ENCODE measurements at regions of chr2 and their contacts with region 1.

Region 1: DNA sequence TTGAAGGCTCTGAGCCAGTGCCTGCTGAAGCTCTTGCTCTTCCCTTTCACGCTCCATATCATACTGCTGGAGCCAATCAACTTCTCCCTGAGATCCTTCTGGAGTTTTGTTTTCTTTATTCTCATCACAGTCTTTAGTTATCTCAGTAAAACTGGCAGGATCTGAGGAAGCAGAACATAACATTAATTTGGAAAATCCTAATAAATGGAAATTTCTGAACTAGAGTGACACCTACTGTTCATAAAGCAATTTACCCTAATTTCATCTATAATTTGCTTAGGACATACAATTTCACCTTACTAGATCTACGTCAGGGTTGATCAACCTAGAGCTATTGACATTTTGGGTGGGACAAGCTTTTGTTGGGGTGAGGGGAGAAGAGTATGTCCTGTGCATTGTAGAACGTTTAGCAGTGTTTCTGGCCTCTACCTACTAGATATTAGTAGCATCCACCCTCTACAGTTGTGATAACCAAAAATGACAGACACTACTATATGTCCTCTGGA is 47.1 kb downstream of the VIL1 start:
- DNase-seq: no peak
- ATAC-seq: peak in 1 of 4 donors; percentile 45
- H3K4me3 ChIP-seq: no peak overlapping the region
- H3K27ac ChIP-seq: no peak overlapping the region
- H3K4me1 ChIP-seq: no peaks in the 10 kb centered on the region
- H3K27me3 ChIP-seq: no peaks in the 10 kb centered on the region
- CTCF ChIP-seq: peak; percentile 47

Region 2: GRCh38 chr2:218292048-218293014 is 173.7 kb before region 1 on chr2 and contains the start of gene TMBIM1:
- intact Hi-C with region 1: loop called (anchors 5 to 10 kb)
- DNase-seq: peak; percentile 88 to 92
- ATAC-seq: peak; percentile 88 to 95 (median 93)
- H3K4me3 ChIP-seq: peak within 1 kb of the TSS; percentile 93
- H3K27ac ChIP-seq: peak within 1 kb of the TSS; percentile 96
- H3K4me1 ChIP-seq: peaks cover 39% of the 10 kb centered on the region
- H3K27me3 ChIP-seq: no peaks in the 10 kb centered on the region
- CTCF ChIP-seq: peak; percentile 96
- total RNA-seq, gene TMBIM1: 152 to 197 (median 157) TPM

Region 3: GRCh38 chr2:218406209-218406948 is 59.7 kb before region 1 on chr2:
- intact Hi-C with region 1: loop called (anchors 2 kb)
- DNase-seq: peak; percentile 98 to 99
- ATAC-seq: peak; percentile 86 to 89 (median 88)
- H3K4me3 ChIP-seq: peak overlapping the region; percentile 60
- H3K27ac ChIP-seq: peak overlapping the region; percentile 74
- H3K4me1 ChIP-seq: peaks cover 26% of the 10 kb centered on the region
- H3K27me3 ChIP-seq: no peaks in the 10 kb centered on the region
- CTCF ChIP-seq: peak; percentile 71

Measured in psoas muscle (tissue), 8 donors.